ENCODE measurements at regions of chr6 and their contacts with region 1.

Region 1: GRCh38 chr6:102670735-102671134 is 1277.2 kb downstream of the GRIK2 start:
- DNase-seq: no peak
- H3K4me3 ChIP-seq: no peak overlapping the region
- H3K27ac ChIP-seq: no peak overlapping the region
- H3K4me1 ChIP-seq: no peaks in the 10 kb centered on the region
- CTCF ChIP-seq: no peak

Region 2: GRCh38 chr6:103729658-103730057 is 1058.9 kb after region 1 on chr6:
- CTCF ChIA-PET with region 1: no interaction called
- POLR2A ChIA-PET with region 1: interaction called, 12 read pairs
- intact Hi-C with region 1: no loop called
- DNase-seq: no peak
- H3K4me3 ChIP-seq: no peak overlapping the region
- H3K27ac ChIP-seq: no peak overlapping the region
- H3K4me1 ChIP-seq: no peaks in the 10 kb centered on the region
- CTCF ChIP-seq: no peak